ENCODE measurements at regions of chr12 and their contacts with region 1.

Region 1: DNA sequence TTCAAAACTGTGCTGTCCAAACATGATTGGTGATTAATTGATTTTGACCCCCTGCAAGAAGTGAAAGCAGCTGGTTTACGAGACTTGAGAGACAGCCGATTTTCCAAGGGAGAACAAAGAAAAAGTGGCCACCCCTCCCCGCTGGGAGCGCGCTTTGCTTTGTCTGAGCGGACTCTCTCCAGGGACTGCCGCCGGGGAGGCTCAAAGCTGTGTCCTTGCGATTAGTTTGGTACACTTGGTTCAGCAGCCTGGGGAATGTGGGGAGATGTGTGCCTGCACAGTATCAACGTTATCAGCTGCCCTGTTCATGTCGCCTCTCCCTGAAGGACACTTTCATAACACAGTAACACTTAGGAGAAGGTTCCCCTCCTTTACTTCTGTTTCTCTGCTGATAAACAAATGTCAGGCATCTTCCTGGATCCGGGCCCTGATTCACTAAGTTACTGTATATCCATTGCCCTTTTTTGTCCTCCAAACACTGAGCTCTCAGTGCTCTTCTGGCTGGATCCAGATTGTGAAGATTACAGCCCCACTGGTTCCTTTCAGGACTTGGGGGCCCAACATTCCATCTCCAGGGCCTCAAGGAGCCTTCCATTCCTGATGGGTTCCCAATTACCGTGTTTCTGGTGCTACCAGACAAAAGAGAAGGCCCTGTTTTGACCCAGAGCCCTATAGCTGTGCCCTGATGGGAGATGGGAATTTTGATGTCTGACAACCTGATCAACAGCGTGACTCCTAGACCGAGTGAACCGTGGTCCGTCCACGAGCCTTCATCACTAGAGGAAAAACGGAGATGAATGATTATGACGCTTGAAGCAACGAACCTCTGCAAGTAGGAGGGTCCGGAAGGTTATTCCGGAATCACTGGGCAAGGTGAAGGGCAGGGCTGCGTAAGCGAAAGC is 31.7 kb upstream of the TUBA1C start:
- DNase-seq: peak; percentile 96 to 97
- H3K4me3 ChIP-seq: no peak overlapping the region
- H3K4me1 ChIP-seq: peaks cover 37% of the 10 kb centered on the region
- H3K27me3 ChIP-seq: no peaks in the 10 kb centered on the region

Region 2: GRCh38 chr12:49130151-49131050 is 102.8 kb before region 1 on chr12:
- in situ Hi-C with region 1: loop called (anchors 10 kb)
- DNase-seq: peak; percentile 83 to 95
- H3K4me3 ChIP-seq: peak overlapping the region; percentile 100
- H3K4me1 ChIP-seq: peaks cover 24% of the 10 kb centered on the region
- H3K27me3 ChIP-seq: no peaks in the 10 kb centered on the region

Region 3: DNA sequence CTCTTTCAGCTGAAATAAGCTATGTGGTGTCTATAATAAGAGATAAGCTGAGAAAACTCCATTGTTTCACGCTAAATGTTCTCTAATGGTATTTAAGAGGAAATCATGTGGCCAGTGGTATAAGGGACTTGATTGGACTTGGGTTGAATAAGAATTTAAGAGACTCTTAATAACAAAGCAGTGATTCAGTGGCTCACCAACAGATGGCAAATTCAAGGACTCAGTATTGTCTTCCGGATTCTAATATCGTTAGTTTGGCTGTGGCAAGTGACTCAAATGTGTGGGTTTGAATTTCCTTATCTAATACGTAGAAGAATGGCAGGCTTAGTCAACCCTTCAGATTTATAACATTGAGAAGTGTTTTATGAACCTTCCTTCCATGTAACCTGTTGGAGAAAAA is 256.5 kb after region 1 on chr12:
- in situ Hi-C with region 1: no loop called
- DNase-seq: peak in 1 of 2 experiments; percentile 19
- H3K4me3 ChIP-seq: no peak overlapping the region
- H3K4me1 ChIP-seq: no peaks in the 10 kb centered on the region
- H3K27me3 ChIP-seq: no peaks in the 10 kb centered on the region